A673 (cell line): ENCODE measurements at regions of chr21 and their contacts with region 1.

Region 1: GRCh38 chr21:29164325-29164942 is 34.0 kb downstream of the MAP3K7CL start:
- DNase-seq: peak; percentile 88
- H3K4me3 ChIP-seq: no peak overlapping the region
- H3K27ac ChIP-seq: no peak overlapping the region
- H3K4me1 ChIP-seq: peaks cover 12% of the 10 kb centered on the region
- H3K27me3 ChIP-seq: no peaks in the 10 kb centered on the region
- CTCF ChIP-seq: peak; percentile 86

Region 2: GRCh38 chr21:29298348-29299045 is 134.1 kb after region 1 on chr21 and contains the start of gene BACH1:
- CTCF ChIA-PET with region 1: interaction called, 7 read pairs
- POLR2A ChIA-PET with region 1: no interaction called
- intact Hi-C with region 1: loop called (anchors 2 kb)
- DNase-seq: peak; percentile 90
- H3K4me3 ChIP-seq: peak within 1 kb of the TSS; percentile 81
- H3K27ac ChIP-seq: peak within 1 kb of the TSS; percentile 90
- H3K4me1 ChIP-seq: peaks cover 39% of the 10 kb centered on the region
- H3K27me3 ChIP-seq: no peaks in the 10 kb centered on the region
- CTCF ChIP-seq: peak; percentile 31; the same call in 1 of the 2 replicates
- total RNA-seq, gene BACH1: 99.5 and 103 TPM in 2 replicates

Region 3: DNA sequence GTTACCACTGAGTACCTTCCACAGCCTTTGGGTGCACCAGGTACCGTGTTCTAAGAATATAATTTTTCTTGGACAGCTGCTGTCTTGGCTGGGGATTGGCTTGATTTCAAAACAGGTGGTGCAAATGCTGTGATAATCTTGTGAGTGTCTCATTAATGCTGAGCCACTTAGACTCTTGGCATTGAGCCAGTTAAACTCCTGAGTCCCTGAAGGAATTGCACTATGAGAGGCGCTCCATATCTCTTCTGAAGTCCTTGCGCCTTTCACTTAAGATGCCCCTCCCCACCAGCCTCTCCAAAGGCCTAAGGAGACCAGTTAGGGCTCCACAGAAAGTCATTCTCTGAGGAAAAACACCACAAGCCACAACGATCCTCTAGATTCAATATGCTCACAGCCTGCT is 185.3 kb after region 1 on chr21:
- CTCF ChIA-PET with region 1: interaction called, 9 read pairs
- POLR2A ChIA-PET with region 1: no interaction called
- intact Hi-C with region 1: loop called (anchors 2 kb)
- DNase-seq: peak; percentile 44
- H3K4me3 ChIP-seq: no peak overlapping the region
- H3K27ac ChIP-seq: no peak overlapping the region
- H3K4me1 ChIP-seq: peaks cover 26% of the 10 kb centered on the region
- H3K27me3 ChIP-seq: no peaks in the 10 kb centered on the region
- CTCF ChIP-seq: no peak

Region 4: DNA sequence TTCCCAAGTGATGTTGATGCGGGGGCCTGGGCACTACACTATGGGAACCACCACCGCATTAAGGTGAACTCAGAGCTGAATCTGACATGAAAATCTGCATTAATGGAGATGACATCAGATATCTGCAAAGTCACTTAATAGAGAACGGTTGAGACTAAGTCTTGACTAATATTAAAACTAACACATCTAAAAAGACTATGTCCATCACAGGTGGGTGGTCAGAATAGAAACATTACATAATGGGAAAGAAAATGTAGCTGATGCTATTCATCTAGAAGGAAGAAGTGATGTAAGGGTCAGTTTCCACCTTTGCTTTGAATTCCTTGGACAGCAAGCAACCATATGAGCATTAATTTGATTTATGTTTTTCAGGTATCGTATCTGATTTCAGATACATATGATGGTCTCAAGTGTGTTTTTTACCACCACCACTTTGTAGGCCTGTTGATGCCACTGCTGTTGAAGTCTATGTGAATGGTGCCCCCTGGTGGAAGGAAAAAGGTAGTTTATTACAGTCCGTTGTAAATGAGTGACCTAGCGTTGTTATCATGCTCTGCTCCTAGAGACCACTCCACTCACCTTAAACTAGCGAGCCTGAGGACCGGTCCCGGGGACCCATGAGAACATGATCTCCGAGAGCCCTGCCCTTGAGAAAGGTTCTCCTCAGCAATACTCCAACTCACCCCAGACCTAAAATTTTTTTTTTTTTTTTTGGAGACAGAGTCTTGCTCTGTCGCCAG is 207.8 kb after region 1 on chr21:
- CTCF ChIA-PET with region 1: interaction called, 11 read pairs
- POLR2A ChIA-PET with region 1: no interaction called
- intact Hi-C with region 1: loop called (anchors 1 kb)
- DNase-seq: peak; percentile 89
- H3K4me3 ChIP-seq: no peak overlapping the region
- H3K27ac ChIP-seq: no peak overlapping the region
- H3K4me1 ChIP-seq: no peaks in the 10 kb centered on the region
- H3K27me3 ChIP-seq: no peaks in the 10 kb centered on the region
- CTCF ChIP-seq: peak; percentile 71

Region 5: DNA sequence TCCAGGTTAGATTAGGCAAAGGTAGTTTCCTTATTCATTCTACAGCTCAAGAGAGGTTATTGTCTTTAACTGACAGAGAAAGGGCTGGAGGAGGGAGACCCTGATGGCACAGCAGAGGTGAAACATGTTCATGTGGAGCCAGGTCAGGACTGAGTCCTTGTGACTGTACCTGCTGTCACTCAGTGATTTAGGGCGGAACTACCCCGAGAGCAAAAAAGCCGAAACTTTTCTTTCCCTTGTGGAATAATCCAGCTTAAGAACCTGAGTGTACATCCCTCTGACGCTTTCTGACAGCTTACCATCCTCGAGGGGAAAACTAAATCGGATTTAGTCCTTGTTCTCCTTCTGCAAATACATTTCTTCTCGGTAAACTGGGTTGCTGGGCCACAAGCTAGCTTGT is 407.5 kb after region 1 on chr21:
- CTCF ChIA-PET with region 1: no interaction called
- POLR2A ChIA-PET with region 1: no interaction called
- intact Hi-C with region 1: no loop called
- DNase-seq: no peak
- H3K4me3 ChIP-seq: no peak overlapping the region
- H3K27ac ChIP-seq: no peak overlapping the region
- H3K4me1 ChIP-seq: no peaks in the 10 kb centered on the region
- H3K27me3 ChIP-seq: no peaks in the 10 kb centered on the region
- CTCF ChIP-seq: no peak

Region 6: GRCh38 chr21:29843804-29844203 is 679.4 kb after region 1 on chr21:
- CTCF ChIA-PET with region 1: no interaction called
- POLR2A ChIA-PET with region 1: no interaction called
- intact Hi-C with region 1: no loop called
- DNase-seq: no peak
- H3K4me3 ChIP-seq: no peak overlapping the region
- H3K27ac ChIP-seq: no peak overlapping the region
- H3K4me1 ChIP-seq: no peaks in the 10 kb centered on the region
- H3K27me3 ChIP-seq: no peaks in the 10 kb centered on the region
- CTCF ChIP-seq: no peak